K562 (cell line): ENCODE measurements at regions of chr3 and their contacts with region 1.

Region 1: DNA sequence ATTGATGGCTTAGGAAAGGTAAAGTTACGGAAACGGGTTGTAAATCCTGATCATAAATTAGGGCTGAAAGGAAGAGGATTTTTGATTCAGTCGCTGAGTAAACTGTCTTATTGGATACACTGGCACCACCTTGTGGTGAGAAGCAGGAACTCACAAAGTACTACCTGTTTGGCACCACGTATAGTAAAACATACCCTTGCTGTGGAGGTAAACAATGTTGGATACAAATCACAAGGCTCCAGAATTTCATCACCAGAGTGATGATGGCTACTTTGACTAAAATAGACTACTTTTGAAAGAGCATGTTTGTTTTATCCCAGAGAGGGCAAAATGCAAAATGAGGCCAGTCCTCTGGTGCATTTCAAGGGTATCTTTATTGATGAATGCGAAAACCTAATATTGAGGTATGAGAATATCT is 216.9 kb downstream of the IGSF11 start:
- DNase-seq: peak; percentile 19 to 62 (median 34)
- ATAC-seq: peak; percentile 83
- H3K4me3 ChIP-seq: no peak overlapping the region
- H3K27ac ChIP-seq: no peak overlapping the region
- H3K4me1 ChIP-seq: no peaks in the 10 kb centered on the region
- H3K27me3 ChIP-seq: no peaks in the 10 kb centered on the region
- CTCF ChIP-seq: peak; percentile 36 to 67 (median 67); a peak in 5 of 6 replicates
- EP300 ChIP-seq: no peak
- POLR2A ChIP-seq: no peak
- RAD21 ChIP-seq: peak; percentile 80

Region 2: DNA sequence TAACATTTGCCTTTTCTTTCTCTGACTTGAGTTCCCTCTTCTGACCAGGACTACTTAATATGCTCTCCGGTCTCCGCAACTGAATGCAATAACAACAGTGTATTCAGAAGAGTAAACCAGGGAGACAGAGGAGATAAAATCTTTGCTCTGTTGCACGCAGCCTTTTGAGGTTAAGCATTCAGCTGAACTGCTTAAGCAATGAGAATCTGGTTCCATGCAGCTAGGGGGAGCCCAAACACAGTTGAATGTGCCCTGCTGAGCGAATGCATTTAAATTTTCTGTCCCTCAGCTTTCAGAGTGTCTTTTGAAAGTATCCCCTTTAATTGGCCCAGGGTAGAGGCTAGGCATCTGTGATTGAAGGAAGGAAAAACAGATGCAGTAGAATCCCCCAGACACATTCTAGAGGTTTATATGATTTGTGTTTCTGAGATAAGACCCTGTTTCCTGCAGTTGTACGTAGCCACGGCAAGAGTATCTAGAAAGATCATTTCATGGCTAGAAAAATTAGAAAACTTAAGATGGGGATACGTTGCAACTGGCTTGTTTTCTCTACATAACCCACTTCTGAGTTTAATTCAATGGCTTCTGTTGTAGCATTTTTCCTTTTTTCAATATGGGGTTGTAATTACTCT is 1798.6 kb before region 1 on chr3:
- CTCF ChIA-PET with region 1: no interaction called
- POLR2A ChIA-PET with region 1: no interaction called
- in situ Hi-C with region 1: loop called (anchors 25 kb)
- intact Hi-C with region 1: no loop called
- DNase-seq: peak in 2 of 4 experiments; percentile 2 to 16
- ATAC-seq: no peak
- H3K4me3 ChIP-seq: no peak overlapping the region
- H3K27ac ChIP-seq: no peak overlapping the region
- H3K4me1 ChIP-seq: no peaks in the 10 kb centered on the region
- H3K27me3 ChIP-seq: no peaks in the 10 kb centered on the region
- CTCF ChIP-seq: 0 out of 6 replicates have a peak, but pooled peaks of 2 of the 3 experiments have one; percentile 12 to 17
- EP300 ChIP-seq: no peak
- POLR2A ChIP-seq: no peak
- RAD21 ChIP-seq: peak in 1 of 2 experiments; percentile 41; a peak in 3 of 4 replicates

Region 3: GRCh38 chr3:117063930-117064329 is 1753.8 kb before region 1 on chr3:
- CTCF ChIA-PET with region 1: no interaction called
- POLR2A ChIA-PET with region 1: no interaction called
- in situ Hi-C with region 1: no loop called
- intact Hi-C with region 1: loop called (anchors 10 kb)
- DNase-seq: no peak
- ATAC-seq: no peak
- H3K4me3 ChIP-seq: no peak overlapping the region
- H3K27ac ChIP-seq: no peak overlapping the region
- H3K4me1 ChIP-seq: no peaks in the 10 kb centered on the region
- H3K27me3 ChIP-seq: no peaks in the 10 kb centered on the region
- CTCF ChIP-seq: no peak
- EP300 ChIP-seq: no peak
- POLR2A ChIP-seq: no peak
- RAD21 ChIP-seq: no peak

Region 4: GRCh38 chr3:118000219-118000618 is 817.5 kb before region 1 on chr3:
- CTCF ChIA-PET with region 1: no interaction called
- POLR2A ChIA-PET with region 1: no interaction called
- in situ Hi-C with region 1: no loop called
- intact Hi-C with region 1: loop called (anchors 5 kb)
- DNase-seq: no peak
- ATAC-seq: no peak
- H3K4me3 ChIP-seq: no peak overlapping the region
- H3K27ac ChIP-seq: no peak overlapping the region
- H3K4me1 ChIP-seq: no peaks in the 10 kb centered on the region; a peak in 1 of 5 replicates
- H3K27me3 ChIP-seq: no peaks in the 10 kb centered on the region
- CTCF ChIP-seq: no peak
- EP300 ChIP-seq: no peak
- POLR2A ChIP-seq: no peak
- RAD21 ChIP-seq: no peak

Region 5: GRCh38 chr3:118636841-118637240 is 180.9 kb before region 1 on chr3:
- CTCF ChIA-PET with region 1: no interaction called
- POLR2A ChIA-PET with region 1: no interaction called
- in situ Hi-C with region 1: no loop called
- intact Hi-C with region 1: loop called (anchors 10 kb)
- DNase-seq: peak in 1 of 4 experiments; percentile 2
- ATAC-seq: peak; percentile 50; the same call in 1 of the 3 replicates
- H3K4me3 ChIP-seq: no peak overlapping the region
- H3K27ac ChIP-seq: no peak overlapping the region
- H3K4me1 ChIP-seq: no peaks in the 10 kb centered on the region
- H3K27me3 ChIP-seq: no peaks in the 10 kb centered on the region
- CTCF ChIP-seq: peak in 1 of 3 experiments; percentile 23; a peak in 2 of 6 replicates
- EP300 ChIP-seq: no peak
- POLR2A ChIP-seq: no peak
- RAD21 ChIP-seq: peak in 1 of 2 experiments; percentile 53; a peak in 3 of 4 replicates

Region 6: GRCh38 chr3:118833075-118833474 is 15.3 kb after region 1 on chr3:
- CTCF ChIA-PET with region 1: no interaction called
- POLR2A ChIA-PET with region 1: no interaction called
- in situ Hi-C with region 1: no loop called
- intact Hi-C with region 1: no loop called
- DNase-seq: no peak
- ATAC-seq: no peak
- H3K4me3 ChIP-seq: no peak overlapping the region
- H3K27ac ChIP-seq: no peak overlapping the region
- H3K4me1 ChIP-seq: no peaks in the 10 kb centered on the region
- H3K27me3 ChIP-seq: 0 out of 5 replicates have a peak, but pooled peaks cover 0 to 2% of the 10 kb centered on the region in 2 experiments
- CTCF ChIP-seq: no peak
- EP300 ChIP-seq: no peak
- POLR2A ChIP-seq: no peak
- RAD21 ChIP-seq: no peak

Region 7: GRCh38 chr3:118943597-118943996 is 125.8 kb after region 1 on chr3:
- CTCF ChIA-PET with region 1: no interaction called
- POLR2A ChIA-PET with region 1: no interaction called
- in situ Hi-C with region 1: no loop called
- intact Hi-C with region 1: no loop called
- DNase-seq: peak; percentile 22 to 71 (median 27)
- ATAC-seq: peak; percentile 45
- H3K4me3 ChIP-seq: no peak overlapping the region
- H3K27ac ChIP-seq: no peak overlapping the region; the same call in 2 of the 3 replicates
- H3K4me1 ChIP-seq: peaks cover 0 to 34% of the 10 kb centered on the region in 2 experiments
- H3K27me3 ChIP-seq: no peaks in the 10 kb centered on the region
- CTCF ChIP-seq: no peak
- EP300 ChIP-seq: peak; percentile 61; the same call in 1 of the 2 replicates
- POLR2A ChIP-seq: no peak
- RAD21 ChIP-seq: no peak